ENCODE measurements at regions of chr4 and their contacts with region 1.

Region 1: DNA sequence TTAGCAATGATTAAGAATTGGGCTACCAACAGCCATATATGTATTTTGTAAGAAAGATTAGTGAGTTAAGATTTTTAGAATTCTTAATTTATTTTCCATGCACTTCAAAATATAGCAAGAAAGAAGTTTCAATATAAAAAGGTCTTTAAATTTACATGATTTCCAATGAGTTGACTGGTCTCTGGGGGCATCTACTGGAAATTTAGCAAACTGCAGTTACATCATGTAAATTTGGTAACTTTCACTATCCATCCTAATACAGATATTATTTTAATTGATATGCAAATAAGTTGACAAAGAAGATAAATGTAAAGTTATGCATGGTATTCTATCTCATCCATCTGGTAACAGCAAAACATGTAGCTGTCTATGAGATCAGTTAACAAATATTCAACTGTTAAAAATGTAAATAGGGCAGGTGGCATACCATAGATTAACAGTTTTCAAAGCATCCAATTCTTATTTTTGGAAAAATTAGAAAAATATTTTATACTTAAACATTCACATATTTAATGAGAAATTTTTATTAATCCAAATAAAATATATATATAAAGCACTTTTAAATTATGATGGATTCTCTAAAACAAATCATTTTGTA is 29.1 kb downstream of the TTC29 start:
- DNase-seq: peak; percentile 26
- ATAC-seq: no peak
- H3K4me3 ChIP-seq: no peak overlapping the region
- H3K27ac ChIP-seq: no peak overlapping the region
- H3K4me1 ChIP-seq: no peaks in the 10 kb centered on the region
- H3K27me3 ChIP-seq: peaks cover 56% of the 10 kb centered on the region
- CTCF ChIP-seq: peak; percentile 55 to 76 (median 67); a peak in 5 of 6 replicates
- POLR2A ChIP-seq: no peak
- RAD21 ChIP-seq: peak; percentile 83

Region 2: GRCh38 chr4:145840162-145840768 is 1076.3 kb before region 1 on chr4:
- CTCF ChIA-PET with region 1: no interaction called
- POLR2A ChIA-PET with region 1: no interaction called
- RAD21 ChIA-PET with region 1: no interaction called
- intact Hi-C with region 1: loop called (anchors 10 kb)
- DNase-seq: peak; percentile 35
- ATAC-seq: peak; percentile 100
- H3K4me3 ChIP-seq: no peak overlapping the region
- H3K27ac ChIP-seq: no peak overlapping the region
- H3K4me1 ChIP-seq: no peaks in the 10 kb centered on the region
- H3K27me3 ChIP-seq: no peaks in the 10 kb centered on the region
- CTCF ChIP-seq: peak; percentile 42 to 61 (median 44); a peak in 4 of 6 replicates
- POLR2A ChIP-seq: no peak
- RAD21 ChIP-seq: peak; percentile 48

Region 3: DNA sequence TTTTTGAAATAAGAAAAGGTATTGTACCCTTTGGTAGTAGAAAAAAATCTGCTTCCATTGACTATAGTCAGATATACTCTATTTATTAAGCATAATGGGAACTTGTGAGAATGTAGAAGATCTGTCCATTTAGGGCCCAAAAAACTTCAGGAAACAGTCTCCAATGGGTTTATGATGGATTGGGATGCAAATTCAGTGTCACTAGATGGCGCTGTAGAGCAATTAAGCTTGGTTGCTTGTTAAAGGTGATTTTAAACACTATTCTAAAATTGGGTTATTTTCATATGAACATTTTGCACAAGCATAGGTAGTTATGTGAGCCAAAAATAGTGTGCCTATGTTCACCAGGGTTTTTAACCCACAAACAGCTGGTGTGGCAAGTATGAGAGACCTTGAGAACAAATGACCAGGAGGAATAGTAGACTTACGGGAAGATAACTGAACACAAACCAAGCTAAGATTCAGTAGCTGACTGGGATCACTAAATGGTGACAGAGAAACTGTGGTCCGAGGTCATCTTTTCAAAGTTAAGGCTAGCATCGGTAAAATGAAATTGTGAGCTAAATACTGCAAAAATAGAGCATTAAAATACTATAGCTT is 821.4 kb before region 1 on chr4:
- CTCF ChIA-PET with region 1: interaction called, 3 read pairs
- POLR2A ChIA-PET with region 1: no interaction called
- RAD21 ChIA-PET with region 1: no interaction called
- intact Hi-C with region 1: loop called (anchors 10 kb)
- DNase-seq: peak; percentile 57
- ATAC-seq: peak; percentile 66; the same call in 1 of the 2 replicates
- H3K4me3 ChIP-seq: no peak overlapping the region
- H3K27ac ChIP-seq: no peak overlapping the region
- H3K4me1 ChIP-seq: no peaks in the 10 kb centered on the region
- H3K27me3 ChIP-seq: no peaks in the 10 kb centered on the region
- CTCF ChIP-seq: peak; percentile 51 to 92 (median 79); a peak in 5 of 6 replicates
- POLR2A ChIP-seq: no peak
- RAD21 ChIP-seq: peak; percentile 61

Region 4: DNA sequence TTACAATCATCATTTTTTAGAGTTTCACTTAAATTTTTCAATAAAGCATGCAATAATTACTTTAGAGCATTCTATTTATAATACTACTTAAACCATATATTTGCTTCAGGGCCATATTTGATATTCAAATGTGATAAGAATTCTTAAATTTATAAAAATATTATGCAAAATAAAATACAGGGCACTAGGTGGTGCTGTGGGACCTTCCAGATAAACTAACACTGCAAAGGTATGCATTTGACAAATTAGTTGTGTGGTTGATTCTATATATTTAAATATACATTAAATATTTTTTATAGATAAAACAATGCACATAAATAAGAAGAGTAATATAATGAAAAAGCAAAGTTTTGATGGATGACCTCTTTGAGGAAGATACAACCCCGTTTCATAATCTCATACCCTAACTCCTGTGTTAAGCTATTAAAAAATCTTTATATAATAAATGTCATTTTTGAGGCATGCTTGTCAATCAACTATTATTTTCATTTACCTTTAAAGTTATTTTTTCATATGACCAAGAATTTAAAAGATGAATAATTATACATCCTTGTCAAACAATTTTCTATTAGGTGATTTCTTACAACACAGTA is 573.9 kb before region 1 on chr4:
- CTCF ChIA-PET with region 1: interaction called, 20 read pairs
- POLR2A ChIA-PET with region 1: no interaction called
- RAD21 ChIA-PET with region 1: no interaction called
- intact Hi-C with region 1: loop called (anchors 2 kb)
- DNase-seq: no peak
- ATAC-seq: no peak
- H3K4me3 ChIP-seq: no peak overlapping the region
- H3K27ac ChIP-seq: no peak overlapping the region
- H3K4me1 ChIP-seq: no peaks in the 10 kb centered on the region
- H3K27me3 ChIP-seq: no peaks in the 10 kb centered on the region
- CTCF ChIP-seq: peak; percentile 34 to 64 (median 46); a peak in 3 of 6 replicates
- POLR2A ChIP-seq: no peak
- RAD21 ChIP-seq: peak; percentile 74

Region 5: GRCh38 chr4:146534178-146534577 is 382.4 kb before region 1 on chr4:
- CTCF ChIA-PET with region 1: no interaction called
- POLR2A ChIA-PET with region 1: no interaction called
- RAD21 ChIA-PET with region 1: no interaction called
- intact Hi-C with region 1: no loop called
- DNase-seq: no peak
- ATAC-seq: no peak
- H3K4me3 ChIP-seq: no peak overlapping the region
- H3K27ac ChIP-seq: no peak overlapping the region
- H3K4me1 ChIP-seq: no peaks in the 10 kb centered on the region
- H3K27me3 ChIP-seq: no peaks in the 10 kb centered on the region
- CTCF ChIP-seq: no peak
- POLR2A ChIP-seq: no peak
- RAD21 ChIP-seq: no peak

Region 6: GRCh38 chr4:146943691-146944400 is 27.3 kb after region 1 on chr4:
- CTCF ChIA-PET with region 1: no interaction called
- POLR2A ChIA-PET with region 1: no interaction called
- RAD21 ChIA-PET with region 1: no interaction called
- intact Hi-C with region 1: loop called (anchors 1 kb)
- DNase-seq: no peak
- ATAC-seq: no peak
- H3K4me3 ChIP-seq: no peak overlapping the region
- H3K27ac ChIP-seq: no peak overlapping the region
- H3K4me1 ChIP-seq: peaks cover 0 to 8% of the 10 kb centered on the region in 2 experiments; a peak in 1 of 4 replicates
- H3K27me3 ChIP-seq: peaks cover 60% of the 10 kb centered on the region
- CTCF ChIP-seq: no peak
- POLR2A ChIP-seq: no peak
- RAD21 ChIP-seq: no peak

Measured in HCT116 (cell line).